ENCODE measurements at regions of chr1 and their contacts with region 1.

Region 1: DNA sequence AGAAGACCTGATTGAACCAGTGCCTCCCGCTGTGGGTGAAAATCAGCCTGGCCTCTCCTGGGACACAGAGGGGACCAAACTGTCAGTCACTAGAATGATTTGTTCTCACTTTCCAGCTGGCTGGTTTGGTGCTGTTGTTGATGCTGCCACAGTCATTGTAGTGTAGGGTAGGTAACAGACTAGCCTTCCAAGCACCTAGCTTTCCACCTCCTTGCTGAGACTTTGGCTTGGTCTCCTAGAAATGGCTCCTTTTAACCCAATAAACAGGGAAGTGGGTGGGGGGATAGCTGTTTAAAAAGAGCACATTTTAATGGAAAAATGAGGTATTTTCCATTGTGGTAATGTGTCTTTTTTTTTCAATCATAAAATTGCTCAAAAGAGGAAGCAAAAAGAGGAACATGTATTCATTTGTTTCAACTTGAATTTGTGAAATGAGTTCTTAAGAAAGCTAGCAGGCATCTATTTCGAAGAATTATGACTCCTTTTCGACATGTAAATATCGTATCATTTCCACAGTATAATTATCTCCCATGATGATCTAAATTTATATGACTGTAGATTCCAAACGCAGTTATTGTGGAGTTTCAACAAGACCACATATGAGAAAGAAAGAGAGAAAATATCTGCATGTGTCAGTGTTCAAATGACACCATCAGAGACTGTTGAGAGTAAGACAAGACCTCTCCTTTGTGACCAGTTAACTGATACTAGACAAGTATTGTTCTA is 190.1 kb downstream of the HLX start:
- DNase-seq: no peak
- H3K4me3 Mint-ChIP-seq: no peak overlapping the region
- H3K27ac Mint-ChIP-seq: peak overlapping the region; percentile 77
- H3K4me1 Mint-ChIP-seq: peaks cover 12% of the 10 kb centered on the region
- H3K27me3 Mint-ChIP-seq: no peaks in the 10 kb centered on the region

Region 2: DNA sequence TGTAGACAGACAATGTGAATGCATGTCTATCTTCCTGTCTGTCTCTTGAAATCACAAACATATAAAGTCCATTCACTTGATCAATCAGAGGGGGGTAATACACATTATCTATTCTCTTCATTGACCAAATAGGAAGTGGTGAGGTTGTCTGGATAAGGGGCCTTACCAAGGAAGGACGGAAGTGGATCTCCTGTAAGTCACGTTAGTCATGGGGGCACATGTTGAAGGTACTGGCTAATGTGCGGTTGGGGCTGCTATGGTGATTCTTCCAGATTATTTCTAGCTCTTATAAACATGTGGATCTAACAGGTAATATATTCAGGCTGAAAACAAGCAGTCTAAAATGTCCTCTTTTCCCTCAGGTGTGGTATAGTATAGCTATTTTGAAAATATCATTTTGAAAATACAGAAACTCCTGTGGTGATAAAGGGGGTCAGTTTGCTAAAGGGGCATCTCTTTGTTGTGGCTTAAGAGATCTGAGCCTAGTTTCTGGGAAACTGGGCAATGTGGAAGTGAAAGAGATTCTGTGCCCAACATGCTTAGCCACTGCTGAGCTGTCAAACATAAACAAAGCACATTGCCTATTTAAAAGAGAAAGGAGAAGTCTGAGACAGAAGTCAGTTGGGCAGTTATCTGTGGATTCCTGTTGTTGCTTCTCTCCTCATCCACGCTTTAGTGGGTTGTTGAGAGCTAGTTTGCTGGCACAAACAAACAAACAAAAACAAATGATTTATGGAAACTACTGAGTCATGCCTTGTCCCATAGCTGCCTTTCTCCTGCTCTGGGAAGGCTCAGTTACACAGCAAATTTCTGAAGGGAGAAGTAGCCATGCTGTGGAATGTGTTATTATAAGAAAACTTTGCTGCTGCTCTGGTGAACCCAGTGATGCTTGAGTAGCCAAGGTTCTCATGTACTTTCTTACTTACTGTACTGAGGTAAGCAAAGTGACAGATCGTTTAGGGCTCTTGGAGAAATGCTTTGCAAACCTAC is 23.2 kb before region 1 on chr1:
- intact Hi-C with region 1: loop called (anchors 1 kb)
- DNase-seq: no peak
- H3K4me3 Mint-ChIP-seq: no peak overlapping the region
- H3K27ac Mint-ChIP-seq: no peak overlapping the region
- H3K4me1 Mint-ChIP-seq: peaks cover 9% of the 10 kb centered on the region
- H3K27me3 Mint-ChIP-seq: peaks cover 2% of the 10 kb centered on the region

Region 3: GRCh38 chr1:221315330-221315729 is 246.0 kb after region 1 on chr1:
- intact Hi-C with region 1: no loop called
- DNase-seq: no peak
- H3K4me3 Mint-ChIP-seq: no peak overlapping the region
- H3K27ac Mint-ChIP-seq: no peak overlapping the region
- H3K4me1 Mint-ChIP-seq: no peaks in the 10 kb centered on the region
- H3K27me3 Mint-ChIP-seq: peaks cover 1% of the 10 kb centered on the region

Measured in activated T-helper 1 cell treated with anti-CD3 and anti-CD28 coated beads, Interleukin-12 subunit alpha, Interleukin-12 subunit beta, Interleukin-2, Interleukin-4 antibody, amounts not matched to agents 30 ng/mL and 10 ng/mL and 1 ng/mL, durations not matched to agents 14 hours and 24 hours and 36 hours (primary cell).